ENCODE measurements at regions of chr17 and their contacts with region 1.

Region 1: GRCh38 chr17:77331301-77331864 is 190.6 kb downstream of the SEC14L1 start:
- DNase-seq: peak; percentile 98
- ATAC-seq: peak; percentile 89
- H3K4me3 Mint-ChIP-seq: peak overlapping the region; percentile 50
- H3K27ac Mint-ChIP-seq: peak overlapping the region; percentile 73
- H3K4me1 Mint-ChIP-seq: peaks cover 44% of the 10 kb centered on the region
- H3K27me3 Mint-ChIP-seq: no peaks in the 10 kb centered on the region

Region 2: DNA sequence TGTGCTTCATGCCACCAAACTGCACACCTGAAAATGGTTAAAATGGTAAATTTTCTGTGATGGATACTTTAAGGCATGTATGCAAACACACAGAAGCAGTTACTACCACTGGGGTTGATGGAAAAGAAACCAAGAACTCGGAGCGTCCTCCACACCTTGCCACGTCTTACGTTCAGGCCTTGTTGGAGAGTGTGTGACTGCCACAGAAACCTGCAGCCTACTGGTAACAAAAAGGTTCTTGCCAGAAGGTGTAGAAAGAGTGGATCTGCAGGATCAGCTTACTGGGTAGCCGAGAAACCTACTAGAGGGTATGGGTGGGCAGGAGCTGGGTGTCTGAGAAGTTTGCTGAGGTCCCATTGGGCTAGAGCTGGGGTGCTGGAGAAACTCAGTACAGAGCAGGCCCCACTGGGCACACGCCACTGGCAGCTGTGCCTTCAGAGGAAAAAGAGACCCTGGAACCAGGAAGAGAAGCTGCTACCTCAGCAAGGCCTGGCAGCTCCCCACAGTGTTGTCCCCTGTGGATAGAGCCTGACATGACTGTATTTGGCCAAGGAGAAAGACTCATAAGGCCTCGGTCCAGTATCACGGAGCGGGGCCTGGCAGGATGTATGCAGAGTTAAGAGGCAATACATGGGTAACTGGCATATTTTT is 14.0 kb after region 1 on chr17:
- CTCF ChIA-PET with region 1: interaction called, 12 read pairs
- POLR2A ChIA-PET with region 1: interaction called, 4 read pairs
- intact Hi-C with region 1: loop called in 1 of 2 experiments (anchors 1 kb)
- DNase-seq: no peak
- ATAC-seq: no peak
- H3K4me3 Mint-ChIP-seq: no peak overlapping the region
- H3K27ac Mint-ChIP-seq: no peak overlapping the region
- H3K4me1 Mint-ChIP-seq: peaks cover 51% of the 10 kb centered on the region
- H3K27me3 Mint-ChIP-seq: no peaks in the 10 kb centered on the region

Region 3: GRCh38 chr17:77372444-77373298 is 41.3 kb after region 1 on chr17:
- CTCF ChIA-PET with region 1: interaction called, 13 read pairs
- POLR2A ChIA-PET with region 1: no interaction called
- intact Hi-C with region 1: loop called (anchors 1 to 2 kb)
- DNase-seq: peak; percentile 78
- ATAC-seq: peak; percentile 17
- H3K4me3 Mint-ChIP-seq: peak overlapping the region; percentile 67
- H3K27ac Mint-ChIP-seq: peak overlapping the region; percentile 74
- H3K4me1 Mint-ChIP-seq: peaks cover 61% of the 10 kb centered on the region
- H3K27me3 Mint-ChIP-seq: no peaks in the 10 kb centered on the region

Region 4: GRCh38 chr17:77429919-77430752 is 98.8 kb after region 1 on chr17:
- CTCF ChIA-PET with region 1: interaction called, 53 read pairs
- POLR2A ChIA-PET with region 1: no interaction called
- intact Hi-C with region 1: loop called in 1 of 2 experiments (anchors 2 kb)
- DNase-seq: peak; percentile 92
- ATAC-seq: peak; percentile 47
- H3K4me3 Mint-ChIP-seq: no peak overlapping the region
- H3K27ac Mint-ChIP-seq: peak overlapping the region; percentile 13
- H3K4me1 Mint-ChIP-seq: peaks cover 91% of the 10 kb centered on the region
- H3K27me3 Mint-ChIP-seq: no peaks in the 10 kb centered on the region

Region 5: DNA sequence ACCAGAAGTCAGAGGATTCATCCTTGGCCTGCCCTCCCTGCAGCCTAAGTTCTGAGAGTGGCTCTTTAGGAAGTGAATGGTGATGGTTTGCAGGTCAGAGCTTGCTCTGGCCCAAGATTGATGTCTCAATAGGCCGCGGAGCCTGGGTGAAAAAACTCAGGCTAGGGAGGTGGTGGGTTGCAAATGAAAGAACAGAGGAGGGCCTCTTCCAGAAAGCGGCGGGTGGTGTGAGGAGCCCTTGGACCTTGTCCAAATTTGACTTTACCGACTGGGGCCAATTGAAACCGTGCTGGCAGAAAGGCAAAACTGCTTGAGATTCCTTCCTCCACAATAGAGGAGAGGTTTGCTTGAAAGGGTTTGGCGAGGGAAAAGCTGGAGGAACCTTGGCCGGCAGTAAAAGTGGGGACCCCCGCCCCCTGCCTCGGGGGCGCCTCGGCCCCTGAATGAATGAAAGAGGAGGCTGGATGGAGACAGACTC is 140.6 kb after region 1 on chr17:
- CTCF ChIA-PET with region 1: interaction called, 9 read pairs
- POLR2A ChIA-PET with region 1: no interaction called
- intact Hi-C with region 1: loop called (anchors 1 to 5 kb)
- DNase-seq: no peak
- ATAC-seq: no peak
- H3K4me3 Mint-ChIP-seq: peak overlapping the region; percentile 70
- H3K27ac Mint-ChIP-seq: peak overlapping the region; percentile 86
- H3K4me1 Mint-ChIP-seq: peaks cover 96% of the 10 kb centered on the region
- H3K27me3 Mint-ChIP-seq: no peaks in the 10 kb centered on the region

Region 6: DNA sequence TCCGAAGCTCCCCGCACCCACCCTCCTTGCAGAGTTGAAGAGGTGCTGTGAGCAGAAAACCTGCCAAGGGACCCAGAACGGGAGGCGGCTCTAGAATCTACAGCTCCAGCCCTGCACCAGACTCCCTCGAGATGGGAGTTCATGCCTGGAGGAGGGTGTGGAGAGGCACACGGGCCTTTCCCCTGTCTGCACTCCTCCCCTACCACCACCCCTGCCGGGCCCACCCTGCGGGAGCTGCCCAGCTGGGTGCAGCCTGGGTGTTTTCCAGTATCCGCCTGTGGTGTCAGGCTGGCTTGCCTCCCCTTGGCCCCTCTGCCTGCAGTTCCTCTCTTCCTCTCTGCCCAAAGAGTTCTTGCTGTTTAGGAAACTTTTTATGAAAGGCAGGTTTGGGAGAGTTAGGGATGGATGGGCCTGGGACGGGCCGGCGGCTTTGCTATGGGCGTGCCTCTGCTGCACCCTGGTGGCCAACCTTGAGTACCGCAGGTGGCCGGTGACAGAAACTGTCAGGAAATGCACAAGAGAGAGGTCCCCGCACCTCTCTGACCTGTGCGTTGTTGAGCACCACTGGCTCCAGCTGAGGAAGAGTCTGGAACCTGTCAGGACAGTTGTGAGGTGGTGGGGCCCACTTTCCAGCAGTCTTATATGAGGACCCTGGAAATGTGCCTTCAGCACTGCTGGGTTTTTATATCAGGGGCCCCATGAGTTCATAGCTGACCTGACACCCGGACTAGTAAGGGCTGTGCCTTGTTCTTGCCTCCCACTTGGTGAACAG is 163.5 kb after region 1 on chr17:
- CTCF ChIA-PET with region 1: interaction called, 30 read pairs
- POLR2A ChIA-PET with region 1: interaction called, 3 read pairs
- intact Hi-C with region 1: loop called (anchors 1 kb)
- DNase-seq: peak; percentile 84
- ATAC-seq: peak; percentile 58
- H3K4me3 Mint-ChIP-seq: no peak overlapping the region
- H3K27ac Mint-ChIP-seq: peak overlapping the region; percentile 63
- H3K4me1 Mint-ChIP-seq: peaks cover 4% of the 10 kb centered on the region
- H3K27me3 Mint-ChIP-seq: no peaks in the 10 kb centered on the region

Region 7: GRCh38 chr17:77842528-77843147 is 511.3 kb after region 1 on chr17:
- CTCF ChIA-PET with region 1: no interaction called
- POLR2A ChIA-PET with region 1: no interaction called
- intact Hi-C with region 1: loop called in 1 of 2 experiments (anchors 2 kb)
- DNase-seq: peak; percentile 65
- ATAC-seq: peak; percentile 63
- H3K4me3 Mint-ChIP-seq: peak overlapping the region; percentile 0
- H3K27ac Mint-ChIP-seq: peak overlapping the region; percentile 32
- H3K4me1 Mint-ChIP-seq: peaks cover 49% of the 10 kb centered on the region
- H3K27me3 Mint-ChIP-seq: peaks cover 5% of the 10 kb centered on the region